Common myeloid progenitor, CD34-positive (primary cell): ENCODE measurements at regions of chr12 and their contacts with region 1.

Region 1: GRCh38 chr12:49415521-49415970 is 48.3 kb downstream of the SPATS2 start:
- DNase-seq: no peak
- H3K4me3 ChIP-seq: no peak overlapping the region
- H3K27ac ChIP-seq: no peak overlapping the region
- H3K4me1 ChIP-seq: no peaks in the 10 kb centered on the region
- H3K27me3 ChIP-seq: no peaks in the 10 kb centered on the region

Region 2: GRCh38 chr12:49403971-49404450 is 11.5 kb before region 1 on chr12:
- CTCF ChIA-PET with region 1: interaction called, 4 read pairs
- POLR2A ChIA-PET with region 1: interaction called, 10 read pairs
- DNase-seq: no peak
- H3K4me3 ChIP-seq: no peak overlapping the region
- H3K27ac ChIP-seq: no peak overlapping the region
- H3K4me1 ChIP-seq: no peaks in the 10 kb centered on the region
- H3K27me3 ChIP-seq: no peaks in the 10 kb centered on the region